SK-N-SH (cell line): ENCODE measurements at regions of chr12 and their contacts with region 1.

Region 1: GRCh38 chr12:53481957-53482586 is 17.2 kb downstream of the MAP3K12 start:
- DNase-seq: peak; percentile 60
- H3K4me3 ChIP-seq: no peak overlapping the region
- H3K27ac ChIP-seq: peak overlapping the region in 1 of 2 experiments; percentile 50; a peak in 3 of 4 replicates
- H3K4me1 ChIP-seq: peaks cover 0 to 5% of the 10 kb centered on the region in 2 experiments; a peak in 2 of 4 replicates
- H3K27me3 ChIP-seq: no peaks in the 10 kb centered on the region
- CTCF ChIP-seq: peak; percentile 34
- EP300 ChIP-seq: no peak
- RAD21 ChIP-seq: no peak

Region 2: GRCh38 chr12:53492830-53493611 is 10.9 kb after region 1 on chr12:
- CTCF ChIA-PET with region 1: interaction called, 14 read pairs
- POLR2A ChIA-PET with region 1: interaction called, 28 read pairs
- DNase-seq: peak; percentile 97
- H3K4me3 ChIP-seq: peak overlapping the region; percentile 47 to 57
- H3K27ac ChIP-seq: peak overlapping the region; percentile 63 to 94
- H3K4me1 ChIP-seq: peaks cover 24 to 36% of the 10 kb centered on the region in 2 experiments
- H3K27me3 ChIP-seq: no peaks in the 10 kb centered on the region
- CTCF ChIP-seq: no peak; the same call in 1 of the 2 replicates
- EP300 ChIP-seq: peak in 1 of 2 experiments; percentile 50; a peak in 2 of 4 replicates
- RAD21 ChIP-seq: no peak

Region 3: DNA sequence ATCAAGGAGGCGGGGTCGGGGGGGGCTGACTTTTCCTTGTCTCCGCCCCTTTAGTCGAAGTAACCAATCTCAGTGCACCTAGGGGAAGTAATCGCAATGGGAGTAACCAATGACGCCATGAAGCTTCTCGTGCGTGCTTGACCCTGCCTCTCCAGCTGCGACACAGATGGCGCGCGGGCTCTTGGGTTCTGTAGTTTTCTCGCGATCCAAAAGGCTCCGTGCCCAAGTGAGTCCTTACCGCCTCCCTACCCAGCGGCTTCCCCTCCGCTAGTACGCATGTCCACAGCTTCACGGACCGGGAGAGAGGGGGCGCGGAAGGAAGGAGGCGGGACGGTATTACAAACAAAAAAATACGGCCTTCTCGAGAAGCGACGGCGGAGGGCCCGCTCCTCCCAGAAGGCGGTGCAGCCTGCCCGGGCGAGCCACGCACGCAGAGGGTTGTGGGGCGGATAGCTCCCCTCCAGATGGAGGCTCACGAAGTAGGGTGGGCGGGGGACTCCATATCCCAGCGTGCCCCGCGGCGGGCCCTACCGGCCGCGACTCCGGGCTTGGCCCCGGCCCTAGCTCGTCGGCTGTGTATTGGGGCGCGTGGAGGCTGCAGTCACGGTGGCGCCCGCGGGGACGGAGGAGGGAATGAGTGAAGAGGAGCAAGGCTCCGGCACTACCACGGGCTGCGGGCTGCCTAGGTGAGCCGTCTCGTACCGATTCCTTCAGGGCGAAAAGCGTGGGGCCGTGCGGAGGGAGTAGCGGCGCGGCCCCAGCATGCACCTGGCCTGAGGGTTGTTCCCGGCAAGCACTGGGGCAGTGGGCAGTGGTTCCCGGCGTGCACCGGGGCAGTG is 18.9 kb after region 1 on chr12 and contains the start of gene TARBP2:
- CTCF ChIA-PET with region 1: interaction called, 9 read pairs
- POLR2A ChIA-PET with region 1: interaction called, 16 read pairs
- DNase-seq: peak; percentile 92
- H3K4me3 ChIP-seq: peak within 1 kb of the TSS; percentile 52 to 75
- H3K27ac ChIP-seq: peak within 1 kb of the TSS; percentile 94 to 100
- H3K4me1 ChIP-seq: peaks cover 33 to 37% of the 10 kb centered on the region in 2 experiments
- H3K27me3 ChIP-seq: no peaks in the 10 kb centered on the region
- CTCF ChIP-seq: no peak
- EP300 ChIP-seq: no peak
- RAD21 ChIP-seq: no peak
- polyA plus RNA-seq, gene TARBP2: 57.8 and 69.8 TPM in 2 replicates

Region 4: GRCh38 chr12:53508534-53509199 is 26.6 kb after region 1 on chr12:
- CTCF ChIA-PET with region 1: interaction called, 25 read pairs
- POLR2A ChIA-PET with region 1: interaction called, 12 read pairs
- DNase-seq: peak; percentile 84
- H3K4me3 ChIP-seq: peak overlapping the region in 1 of 2 experiments; percentile 21; a peak in 1 of 4 replicates
- H3K27ac ChIP-seq: peak overlapping the region in 1 of 2 experiments; percentile 31; a peak in 1 of 4 replicates
- H3K4me1 ChIP-seq: peaks cover 0 to 12% of the 10 kb centered on the region in 2 experiments; a peak in 3 of 4 replicates
- H3K27me3 ChIP-seq: no peaks in the 10 kb centered on the region
- CTCF ChIP-seq: peak; percentile 93
- EP300 ChIP-seq: no peak
- RAD21 ChIP-seq: peak; percentile 97